ENCODE measurements at regions of chr12 and their contacts with region 1.

Region 1: GRCh38 chr12:56688129-56688845 is at the start of gene PTGES3:
- DNase-seq: peak; percentile 97 to 98 (median 97)
- H3K4me3 ChIP-seq: peak within 1 kb of the TSS; percentile 85 to 94 (median 88)
- H3K4me3 Mint-ChIP-seq: peak within 1 kb of the TSS; percentile 100
- H3K27ac ChIP-seq: peak within 1 kb of the TSS; percentile 97
- H3K27ac Mint-ChIP-seq: peak within 1 kb of the TSS; percentile 92 to 99 (median 98)
- H3K4me1 ChIP-seq: peaks cover 47 to 62% of the 10 kb centered on the region in 2 donors
- H3K4me1 Mint-ChIP-seq: peaks cover 44% of the 10 kb centered on the region
- H3K27me3 ChIP-seq: no peaks in the 10 kb centered on the region
- H3K27me3 Mint-ChIP-seq: peaks cover 0 to 2% (median 0%) of the 10 kb centered on the region in 3 donors
- CTCF ChIP-seq: no peak
- polyA plus RNA-seq, gene PTGES3: 46.1 to 232 (median 187) TPM

Region 2: GRCh38 chr12:56510786-56511185 is 177.5 kb before region 1 on chr12:
- intact Hi-C with region 1: no loop called
- DNase-seq: no peak
- H3K4me3 ChIP-seq: no peak overlapping the region
- H3K4me3 Mint-ChIP-seq: no peak overlapping the region
- H3K27ac ChIP-seq: no peak overlapping the region
- H3K27ac Mint-ChIP-seq: no peak overlapping the region
- H3K4me1 ChIP-seq: peaks cover 0 to 3% of the 10 kb centered on the region in 2 donors
- H3K4me1 Mint-ChIP-seq: peaks cover 3% of the 10 kb centered on the region
- H3K27me3 ChIP-seq: no peaks in the 10 kb centered on the region
- H3K27me3 Mint-ChIP-seq: no peaks in the 10 kb centered on the region
- CTCF ChIP-seq: no peak

Region 3: GRCh38 chr12:56521590-56522371 is 166.5 kb before region 1 on chr12 and contains the start of gene RBMS2:
- intact Hi-C with region 1: no loop called
- DNase-seq: peak; percentile 36 to 42 (median 37)
- H3K4me3 ChIP-seq: peak within 1 kb of the TSS; percentile 68 to 97 (median 84)
- H3K4me3 Mint-ChIP-seq: peak within 1 kb of the TSS; percentile 78 to 93
- H3K27ac ChIP-seq: peak within 1 kb of the TSS; percentile 35 to 84
- H3K27ac Mint-ChIP-seq: peak within 1 kb of the TSS; percentile 84 to 97 (median 92)
- H3K4me1 ChIP-seq: peaks cover 50 to 54% of the 10 kb centered on the region in 2 donors
- H3K4me1 Mint-ChIP-seq: peaks cover 54% of the 10 kb centered on the region
- H3K27me3 ChIP-seq: no peaks in the 10 kb centered on the region
- H3K27me3 Mint-ChIP-seq: no peaks in the 10 kb centered on the region
- CTCF ChIP-seq: no peak
- polyA plus RNA-seq, gene RBMS2: 5.1 to 8.2 (median 6.5) TPM

Region 4: DNA sequence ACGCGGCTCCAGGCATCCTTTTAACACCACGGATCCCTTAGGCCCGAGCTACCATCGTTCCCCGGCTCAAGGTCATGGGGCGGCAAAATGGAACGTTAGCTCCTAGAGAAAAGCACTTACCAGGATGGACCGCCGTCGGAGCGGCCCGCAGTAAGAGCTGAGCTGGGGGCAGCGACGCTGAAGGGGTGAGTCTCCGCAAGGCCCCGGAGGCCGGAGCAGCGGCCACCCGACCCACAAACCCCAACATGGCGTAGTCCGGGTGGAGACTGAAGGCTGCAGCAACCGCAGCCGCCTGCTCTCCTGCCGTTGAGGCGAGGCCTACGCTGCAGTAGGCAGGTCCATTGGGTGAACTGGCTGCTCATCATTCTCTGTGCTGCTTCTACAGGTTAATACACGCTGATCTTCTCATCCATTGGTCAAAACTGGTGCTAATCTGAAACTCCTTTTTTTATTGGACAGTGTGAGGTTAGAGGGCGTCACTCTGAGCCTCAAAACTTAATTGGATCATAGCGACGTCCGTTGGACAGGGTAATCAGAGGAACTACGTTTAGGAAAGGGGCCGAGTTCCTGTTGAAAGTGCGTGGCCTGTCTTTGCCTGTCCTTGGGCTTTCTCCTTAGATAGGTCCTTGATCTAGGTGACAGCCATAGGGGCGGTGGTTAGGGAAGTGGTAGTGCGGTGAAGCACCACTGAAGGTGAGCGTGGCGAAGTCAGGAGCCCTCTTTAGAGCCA is 42.4 kb before region 1 on chr12 and contains the start of gene ATP5F1B:
- intact Hi-C with region 1: loop called (anchors 5 kb)
- DNase-seq: peak; percentile 98 to 100 (median 99)
- H3K4me3 ChIP-seq: peak within 1 kb of the TSS; percentile 86 to 94 (median 91)
- H3K4me3 Mint-ChIP-seq: peak within 1 kb of the TSS; percentile 97 to 99
- H3K27ac ChIP-seq: peak within 1 kb of the TSS; percentile 81 to 94
- H3K27ac Mint-ChIP-seq: peak within 1 kb of the TSS; percentile 95 to 99 (median 97)
- H3K4me1 ChIP-seq: peaks cover 27 to 38% of the 10 kb centered on the region in 2 donors
- H3K4me1 Mint-ChIP-seq: peaks cover 31% of the 10 kb centered on the region
- H3K27me3 ChIP-seq: no peaks in the 10 kb centered on the region
- H3K27me3 Mint-ChIP-seq: peaks cover 0 to 4% (median 3%) of the 10 kb centered on the region in 3 donors
- CTCF ChIP-seq: no peak
- polyA plus RNA-seq, gene ATP5F1B: 554 to 1,093 (median 1,038) TPM

Region 5: GRCh38 chr12:56724972-56725722 is 36.9 kb after region 1 on chr12 and contains the start of gene NACA:
- intact Hi-C with region 1: loop called (anchors 1 to 5 kb)
- DNase-seq: peak; percentile 98 to 99 (median 99)
- H3K4me3 ChIP-seq: peak within 1 kb of the TSS; percentile 67 to 99 (median 98)
- H3K4me3 Mint-ChIP-seq: peak within 1 kb of the TSS; percentile 98
- H3K27ac ChIP-seq: peak within 1 kb of the TSS; percentile 93 to 97
- H3K27ac Mint-ChIP-seq: peak within 1 kb of the TSS; percentile 97 to 99 (median 98)
- H3K4me1 ChIP-seq: peaks cover 47 to 60% of the 10 kb centered on the region in 2 donors
- H3K4me1 Mint-ChIP-seq: peaks cover 48% of the 10 kb centered on the region
- H3K27me3 ChIP-seq: no peaks in the 10 kb centered on the region
- H3K27me3 Mint-ChIP-seq: peaks cover 0 to 2% (median 0%) of the 10 kb centered on the region in 3 donors
- CTCF ChIP-seq: no peak
- polyA plus RNA-seq, gene NACA: 797 to 1,102 (median 937) TPM

Region 6: GRCh38 chr12:56808954-56809353 is 120.7 kb after region 1 on chr12:
- intact Hi-C with region 1: no loop called
- DNase-seq: no peak
- H3K4me3 ChIP-seq: no peak overlapping the region
- H3K4me3 Mint-ChIP-seq: no peak overlapping the region
- H3K27ac ChIP-seq: no peak overlapping the region
- H3K27ac Mint-ChIP-seq: no peak overlapping the region
- H3K4me1 ChIP-seq: no peaks in the 10 kb centered on the region
- H3K4me1 Mint-ChIP-seq: no peaks in the 10 kb centered on the region
- H3K27me3 ChIP-seq: no peaks in the 10 kb centered on the region
- H3K27me3 Mint-ChIP-seq: peaks cover 2 to 5% (median 3%) of the 10 kb centered on the region in 3 donors
- CTCF ChIP-seq: no peak